IMR-90 (cell line): ENCODE measurements at regions of chr14 and their contacts with region 1.

Region 1: DNA sequence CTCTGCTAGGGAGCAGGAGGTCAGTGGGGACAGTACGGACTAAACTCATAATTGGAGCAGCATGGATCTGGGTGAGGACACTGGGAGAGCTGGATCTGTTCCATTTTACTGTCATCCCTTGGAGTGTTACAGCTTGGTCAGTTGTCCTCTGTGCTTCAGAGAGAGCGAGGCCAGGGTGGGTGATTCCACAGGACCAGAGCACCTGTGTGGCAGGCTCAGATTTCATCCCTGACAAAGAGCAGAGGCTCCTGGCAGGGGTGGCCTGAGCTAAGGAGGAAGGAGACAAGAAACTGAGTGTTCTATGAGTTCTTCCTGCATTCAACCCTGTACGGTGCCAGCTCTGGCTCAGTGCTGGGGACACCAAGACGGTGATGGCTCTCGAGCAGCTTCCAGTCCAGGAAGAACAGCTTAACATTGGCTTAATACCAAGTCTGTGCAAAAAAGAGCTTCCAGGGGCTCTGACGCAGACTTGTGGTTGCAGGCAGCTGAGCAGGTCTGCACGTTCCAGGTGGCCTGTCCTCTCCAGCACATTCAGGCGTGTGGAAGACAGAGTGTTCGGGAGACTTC is 8.4 kb upstream of the PGF start:
- DNase-seq: peak; percentile 76
- ATAC-seq: peak; percentile 11; the same call in 1 of the 2 replicates
- H3K4me3 ChIP-seq: no peak overlapping the region
- H3K27ac ChIP-seq: no peak overlapping the region
- H3K4me1 ChIP-seq: no peaks in the 10 kb centered on the region
- H3K27me3 ChIP-seq: peaks cover 23% of the 10 kb centered on the region
- CTCF ChIP-seq: no peak
- POLR2A ChIP-seq: no peak
- RAD21 ChIP-seq: no peak

Region 2: DNA sequence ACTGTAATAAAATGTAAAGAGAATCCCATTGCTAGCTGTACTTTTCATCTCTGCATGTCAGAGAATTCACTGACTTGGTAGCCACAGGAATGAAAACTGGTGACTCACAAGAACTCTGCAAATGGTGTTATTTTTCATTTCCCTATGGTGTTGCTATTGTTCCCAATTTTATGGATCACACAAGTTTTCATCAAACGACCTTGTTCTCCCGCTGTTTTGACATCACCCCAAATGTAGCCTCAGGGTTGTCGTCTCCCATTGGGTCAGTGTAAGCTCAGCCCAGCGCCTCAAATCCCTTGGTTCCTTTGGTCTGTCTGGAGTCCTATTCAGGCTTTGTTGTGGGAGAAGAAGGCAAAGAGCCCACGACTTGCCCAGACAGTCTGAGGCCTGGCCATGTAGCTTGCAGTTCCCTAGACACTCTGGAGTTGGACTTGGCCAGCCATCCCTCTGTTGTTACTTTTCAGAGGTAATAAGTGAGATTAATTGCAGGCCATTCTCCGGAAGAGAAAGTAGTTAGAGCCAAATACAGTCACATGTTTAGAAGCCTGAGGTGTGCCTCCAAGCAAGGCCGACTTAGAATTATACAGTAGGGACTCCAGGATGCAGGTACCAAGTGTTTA is 858.8 kb after region 1 on chr14:
- CTCF ChIA-PET with region 1: interaction called, 10 read pairs
- POLR2A ChIA-PET with region 1: no interaction called
- dilution Hi-C with region 1: no loop called
- in situ Hi-C with region 1: no loop called
- intact Hi-C with region 1: no loop called
- DNase-seq: peak; percentile 85
- ATAC-seq: peak; percentile 92
- H3K4me3 ChIP-seq: no peak overlapping the region
- H3K27ac ChIP-seq: no peak overlapping the region
- H3K4me1 ChIP-seq: peaks cover 16% of the 10 kb centered on the region
- H3K27me3 ChIP-seq: no peaks in the 10 kb centered on the region
- CTCF ChIP-seq: no peak
- POLR2A ChIP-seq: no peak
- RAD21 ChIP-seq: no peak